IMR-90 (cell line): ENCODE measurements at regions of chr15 and their contacts with region 1.

Region 1: DNA sequence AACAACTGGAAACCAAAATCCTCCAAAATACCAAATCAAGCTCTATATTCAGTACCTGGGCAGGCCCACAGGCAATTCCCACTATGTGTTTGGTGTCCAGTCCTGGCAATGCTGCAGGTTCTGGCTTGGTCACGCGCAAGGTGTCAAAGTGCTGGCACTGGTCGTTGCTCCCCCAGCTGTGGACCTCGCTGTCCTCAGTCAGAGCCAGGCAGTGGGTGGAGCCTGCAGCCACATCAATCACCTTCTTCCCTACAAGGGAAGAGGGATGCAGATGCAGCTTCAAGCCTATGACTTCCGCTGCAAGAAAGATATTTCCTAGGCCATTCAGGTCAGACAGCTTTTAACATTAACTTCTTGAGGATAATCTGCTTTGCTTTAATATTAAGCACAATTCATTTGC is 61.3 kb downstream of the HERC2 start:
- DNase-seq: no peak
- ATAC-seq: no peak
- H3K4me3 ChIP-seq: no peak overlapping the region
- H3K27ac ChIP-seq: no peak overlapping the region
- H3K4me1 ChIP-seq: no peaks in the 10 kb centered on the region
- H3K27me3 ChIP-seq: no peaks in the 10 kb centered on the region
- CTCF ChIP-seq: no peak
- POLR2A ChIP-seq: no peak
- RAD21 ChIP-seq: no peak

Region 2: DNA sequence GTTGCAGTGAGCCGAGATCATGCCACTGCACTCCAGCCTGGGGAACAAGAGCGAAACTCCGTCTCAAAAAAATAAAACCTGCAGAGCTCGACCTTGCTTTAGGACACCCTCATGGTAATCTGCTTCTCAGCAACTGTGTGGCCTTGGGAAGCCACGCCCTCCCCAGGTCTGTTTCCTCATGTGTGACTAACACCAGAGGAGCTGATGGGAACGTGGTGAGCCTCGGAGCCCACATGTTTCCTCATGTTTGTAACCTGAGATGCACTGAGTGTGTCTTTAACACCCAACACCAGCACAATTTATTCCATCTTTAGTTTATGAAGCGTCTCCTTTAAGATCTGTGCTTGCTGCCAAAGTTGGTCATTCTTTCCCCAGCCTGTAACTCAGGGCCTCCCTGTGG is 304.4 kb before region 1 on chr15:
- CTCF ChIA-PET with region 1: no interaction called
- POLR2A ChIA-PET with region 1: no interaction called
- dilution Hi-C with region 1: no loop called
- in situ Hi-C with region 1: no loop called
- intact Hi-C with region 1: no loop called
- DNase-seq: no peak
- ATAC-seq: no peak
- H3K4me3 ChIP-seq: no peak overlapping the region
- H3K27ac ChIP-seq: no peak overlapping the region
- H3K4me1 ChIP-seq: no peaks in the 10 kb centered on the region
- H3K27me3 ChIP-seq: no peaks in the 10 kb centered on the region
- CTCF ChIP-seq: no peak
- POLR2A ChIP-seq: no peak
- RAD21 ChIP-seq: no peak

Region 3: GRCh38 chr15:27990521-27991515 is 269.9 kb before region 1 on chr15:
- CTCF ChIA-PET with region 1: no interaction called
- POLR2A ChIA-PET with region 1: no interaction called
- dilution Hi-C with region 1: no loop called
- in situ Hi-C with region 1: no loop called
- intact Hi-C with region 1: no loop called
- DNase-seq: no peak
- ATAC-seq: no peak
- H3K4me3 ChIP-seq: no peak overlapping the region
- H3K27ac ChIP-seq: no peak overlapping the region
- H3K4me1 ChIP-seq: no peaks in the 10 kb centered on the region
- H3K27me3 ChIP-seq: no peaks in the 10 kb centered on the region
- CTCF ChIP-seq: no peak
- POLR2A ChIP-seq: no peak
- RAD21 ChIP-seq: no peak

Region 4: DNA sequence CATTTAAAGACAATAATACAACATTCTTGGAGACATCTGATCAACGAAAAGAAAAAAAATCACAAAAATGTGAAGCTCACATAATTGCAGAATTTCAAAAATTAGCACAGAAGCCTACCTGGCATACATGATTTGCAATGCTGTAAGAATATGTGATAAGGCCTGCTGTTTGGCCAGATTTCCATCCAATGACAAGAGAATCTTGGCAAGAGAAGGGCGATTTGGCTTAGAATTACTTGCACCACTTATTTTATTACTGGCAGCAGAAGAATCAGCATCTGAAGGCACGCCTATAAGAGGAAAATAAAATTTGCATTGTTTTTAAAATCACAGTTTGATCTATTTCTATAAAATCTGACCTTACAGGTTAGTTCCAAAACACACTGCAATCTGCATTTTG is 91.4 kb before region 1 on chr15:
- CTCF ChIA-PET with region 1: no interaction called
- POLR2A ChIA-PET with region 1: no interaction called
- dilution Hi-C with region 1: no loop called
- in situ Hi-C with region 1: no loop called
- intact Hi-C with region 1: loop called (anchors 10 kb)
- DNase-seq: no peak
- ATAC-seq: no peak
- H3K4me3 ChIP-seq: no peak overlapping the region
- H3K27ac ChIP-seq: no peak overlapping the region
- H3K4me1 ChIP-seq: no peaks in the 10 kb centered on the region
- H3K27me3 ChIP-seq: no peaks in the 10 kb centered on the region
- CTCF ChIP-seq: no peak
- POLR2A ChIP-seq: no peak
- RAD21 ChIP-seq: no peak